ENCODE measurements at regions of chr1 and their contacts with region 1.

Region 1: DNA sequence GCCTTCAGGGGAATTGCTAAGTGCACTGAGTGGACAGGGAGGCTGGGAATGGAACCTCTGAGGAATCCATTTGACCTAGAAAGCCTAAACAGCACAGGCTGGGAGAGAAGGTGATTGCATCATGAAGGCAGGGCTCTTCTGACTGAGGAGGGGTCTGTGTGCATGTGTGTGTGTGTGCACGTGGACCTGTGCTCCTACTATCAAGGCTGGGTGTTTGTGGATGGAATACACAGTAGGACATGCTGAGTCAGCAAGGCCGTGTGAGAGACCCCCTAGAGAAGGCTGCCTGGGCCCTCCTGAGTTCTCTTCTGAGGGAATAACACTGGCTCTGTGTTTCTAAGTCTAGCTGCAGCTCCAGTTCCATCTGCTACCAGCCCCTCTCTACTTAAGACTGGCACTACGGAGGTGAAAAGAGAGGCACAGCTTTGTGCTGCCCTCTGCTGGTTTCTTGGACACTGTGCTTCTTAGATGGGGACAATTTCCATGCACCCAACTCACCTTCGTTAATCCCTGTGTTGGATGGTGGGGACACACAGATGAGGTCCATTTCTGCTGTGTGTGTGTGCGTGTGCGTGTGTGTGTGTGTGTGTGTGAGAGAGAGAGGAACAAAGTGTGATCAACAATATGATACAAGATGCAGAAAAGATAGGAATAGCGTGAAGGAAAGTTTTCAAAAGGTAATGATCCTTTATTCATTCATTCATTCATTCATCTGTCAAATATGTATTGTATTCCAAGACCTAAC is 6.2 kb upstream of the EFCAB14 start:
- DNase-seq: peak; percentile 80
- ATAC-seq: peak; percentile 96
- H3K4me3 ChIP-seq: no peak overlapping the region
- H3K4me3 Mint-ChIP-seq: no peak overlapping the region
- H3K27ac ChIP-seq: no peak overlapping the region
- H3K27ac Mint-ChIP-seq: no peak overlapping the region
- H3K4me1 ChIP-seq: peaks cover 4 to 5% of the 10 kb centered on the region in 2 donors
- H3K4me1 Mint-ChIP-seq: no peaks in the 10 kb centered on the region
- H3K27me3 ChIP-seq: peaks cover 0 to 14% (median 8%) of the 10 kb centered on the region in 4 experiments
- H3K27me3 Mint-ChIP-seq: peaks cover 39% of the 10 kb centered on the region
- CTCF ChIP-seq: peak; percentile 79

Region 2: GRCh38 chr1:46442317-46443161 is 282.6 kb before region 1 on chr1:
- CTCF ChIA-PET with region 1: interaction called, 15 read pairs
- POLR2A ChIA-PET with region 1: no interaction called
- intact Hi-C with region 1: loop called (anchors 1 kb)
- DNase-seq: peak; percentile 69
- ATAC-seq: peak; percentile 74
- H3K4me3 ChIP-seq: peak overlapping the region in 4 of 5 experiments; percentile 11 to 63 (median 34)
- H3K4me3 Mint-ChIP-seq: peak overlapping the region; percentile 85
- H3K27ac ChIP-seq: no peak overlapping the region
- H3K27ac Mint-ChIP-seq: no peak overlapping the region
- H3K4me1 ChIP-seq: peaks cover 6 to 12% of the 10 kb centered on the region in 2 donors
- H3K4me1 Mint-ChIP-seq: peaks cover 16% of the 10 kb centered on the region
- H3K27me3 ChIP-seq: peaks cover 0 to 33% (median 14%) of the 10 kb centered on the region in 4 experiments
- H3K27me3 Mint-ChIP-seq: peaks cover 34% of the 10 kb centered on the region
- CTCF ChIP-seq: peak; percentile 96

Region 3: GRCh38 chr1:46477153-46477929 is 247.8 kb before region 1 on chr1:
- CTCF ChIA-PET with region 1: interaction called, 14 read pairs
- POLR2A ChIA-PET with region 1: no interaction called
- intact Hi-C with region 1: no loop called
- DNase-seq: peak; percentile 84
- ATAC-seq: peak; percentile 87
- H3K4me3 ChIP-seq: no peak overlapping the region
- H3K4me3 Mint-ChIP-seq: peak overlapping the region; percentile 24
- H3K27ac ChIP-seq: no peak overlapping the region
- H3K27ac Mint-ChIP-seq: no peak overlapping the region
- H3K4me1 ChIP-seq: peaks cover 11 to 13% of the 10 kb centered on the region in 2 donors
- H3K4me1 Mint-ChIP-seq: peaks cover 42% of the 10 kb centered on the region
- H3K27me3 ChIP-seq: peaks cover 0 to 16% (median 4%) of the 10 kb centered on the region in 4 experiments
- H3K27me3 Mint-ChIP-seq: peaks cover 31% of the 10 kb centered on the region
- CTCF ChIP-seq: peak; percentile 91

Region 4: GRCh38 chr1:46527474-46528296 is 197.5 kb before region 1 on chr1:
- CTCF ChIA-PET with region 1: interaction called, 24 read pairs
- POLR2A ChIA-PET with region 1: no interaction called
- intact Hi-C with region 1: no loop called
- DNase-seq: peak; percentile 64
- ATAC-seq: peak; percentile 50
- H3K4me3 ChIP-seq: no peak overlapping the region
- H3K4me3 Mint-ChIP-seq: no peak overlapping the region
- H3K27ac ChIP-seq: no peak overlapping the region
- H3K27ac Mint-ChIP-seq: no peak overlapping the region
- H3K4me1 ChIP-seq: no peaks in the 10 kb centered on the region
- H3K4me1 Mint-ChIP-seq: no peaks in the 10 kb centered on the region
- H3K27me3 ChIP-seq: peaks cover 0 to 40% (median 9%) of the 10 kb centered on the region in 4 experiments
- H3K27me3 Mint-ChIP-seq: peaks cover 58% of the 10 kb centered on the region
- CTCF ChIP-seq: peak; percentile 80

Region 5: GRCh38 chr1:46622344-46622743 is 102.8 kb before region 1 on chr1:
- CTCF ChIA-PET with region 1: no interaction called
- POLR2A ChIA-PET with region 1: no interaction called
- intact Hi-C with region 1: loop called (anchors 1 kb)
- DNase-seq: no peak
- ATAC-seq: no peak
- H3K4me3 ChIP-seq: no peak overlapping the region
- H3K4me3 Mint-ChIP-seq: no peak overlapping the region
- H3K27ac ChIP-seq: no peak overlapping the region
- H3K27ac Mint-ChIP-seq: no peak overlapping the region
- H3K4me1 ChIP-seq: peaks cover 22 to 23% of the 10 kb centered on the region in 2 donors
- H3K4me1 Mint-ChIP-seq: peaks cover 22% of the 10 kb centered on the region
- H3K27me3 ChIP-seq: no peaks in the 10 kb centered on the region
- H3K27me3 Mint-ChIP-seq: no peaks in the 10 kb centered on the region
- CTCF ChIP-seq: no peak

Region 6: DNA sequence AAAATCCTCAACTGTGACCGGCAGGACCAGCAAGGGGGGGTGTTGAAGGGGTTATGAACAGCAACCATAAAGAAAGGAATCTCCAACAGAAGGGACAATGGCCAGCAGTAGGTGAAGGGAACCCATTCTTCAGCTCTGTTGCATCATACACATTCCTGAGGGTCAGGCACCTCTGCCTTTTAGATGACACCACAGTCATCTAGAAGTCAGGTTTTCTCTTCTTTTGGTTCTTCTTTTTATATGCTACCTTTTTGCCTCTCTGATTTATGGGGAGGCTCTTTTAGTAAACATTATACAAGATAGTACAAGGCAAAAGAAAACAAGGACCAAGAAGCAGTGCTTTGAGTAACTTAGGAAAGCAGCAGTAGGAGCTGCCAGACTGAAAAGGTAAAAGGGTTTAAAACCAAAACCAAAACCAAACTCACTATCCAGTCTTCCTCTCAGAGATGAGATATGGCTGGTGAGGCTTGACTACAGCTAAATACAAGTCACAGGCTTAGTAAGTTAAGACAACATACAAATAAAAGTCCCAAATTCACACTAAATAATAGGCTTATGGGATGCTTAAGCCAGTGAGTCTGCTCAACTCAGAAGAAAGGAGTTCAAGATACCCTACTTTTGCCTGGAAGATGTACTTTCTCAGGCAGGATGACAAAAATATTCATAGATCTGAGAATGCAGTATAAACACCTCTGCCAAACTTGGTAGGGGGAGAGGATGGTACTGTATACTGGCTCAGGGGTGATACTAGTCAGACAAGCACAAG is 49.4 kb before region 1 on chr1:
- CTCF ChIA-PET with region 1: interaction called, 24 read pairs
- POLR2A ChIA-PET with region 1: no interaction called
- intact Hi-C with region 1: no loop called
- DNase-seq: no peak
- ATAC-seq: no peak
- H3K4me3 ChIP-seq: no peak overlapping the region
- H3K4me3 Mint-ChIP-seq: no peak overlapping the region
- H3K27ac ChIP-seq: peak overlapping the region; percentile 41 to 61
- H3K27ac Mint-ChIP-seq: peak overlapping the region; percentile 78
- H3K4me1 ChIP-seq: peaks cover 5 to 9% of the 10 kb centered on the region in 2 donors
- H3K4me1 Mint-ChIP-seq: peaks cover 13% of the 10 kb centered on the region
- H3K27me3 ChIP-seq: no peaks in the 10 kb centered on the region
- H3K27me3 Mint-ChIP-seq: no peaks in the 10 kb centered on the region
- CTCF ChIP-seq: no peak

Measured in B cell (primary cell).